ENCODE measurements at regions of chr10 and their contacts with region 1.

Region 1: GRCh38 chr10:91117505-91117904 is 103.0 kb upstream of the PCGF5 start:
- DNase-seq: no peak
- ATAC-seq: no peak
- H3K4me3 ChIP-seq: no peak overlapping the region
- H3K4me3 Mint-ChIP-seq: no peak overlapping the region
- H3K27ac ChIP-seq: no peak overlapping the region
- H3K27ac Mint-ChIP-seq: no peak overlapping the region
- H3K4me1 ChIP-seq: no peaks in the 10 kb centered on the region
- H3K4me1 Mint-ChIP-seq: no peaks in the 10 kb centered on the region
- H3K27me3 ChIP-seq: no peaks in the 10 kb centered on the region
- H3K27me3 Mint-ChIP-seq: peaks cover 0 to under 1% of the 10 kb centered on the region in 2 donors

Region 2: GRCh38 chr10:90857635-90858460 is 259.7 kb before region 1 on chr10 and contains the start of gene HTR7:
- CTCF ChIA-PET with region 1: no interaction called
- POLR2A ChIA-PET with region 1: interaction called in 1 of 2 experiments, 12 read pairs
- DNase-seq: peak in 34 of 35 experiments; percentile 21 to 74 (median 46)
- ATAC-seq: peak; percentile 89 to 92 (median 90)
- H3K4me3 ChIP-seq: peak within 1 kb of the TSS; percentile 38 to 84
- H3K4me3 Mint-ChIP-seq: peak within 1 kb of the TSS; percentile 85 to 89 (median 86)
- H3K27ac ChIP-seq: no peak within 1 kb of the TSS
- H3K27ac Mint-ChIP-seq: peak within 1 kb of the TSS in 1 of 2 donors; percentile 52
- H3K4me1 ChIP-seq: peaks cover 6 to 14% of the 10 kb centered on the region in 2 experiments
- H3K4me1 Mint-ChIP-seq: peaks cover 11 to 13% (median 11%) of the 10 kb centered on the region in 3 donors
- H3K27me3 ChIP-seq: peaks cover 7 to 28% of the 10 kb centered on the region in 2 experiments
- H3K27me3 Mint-ChIP-seq: peaks cover 39 to 51% of the 10 kb centered on the region in 2 donors
- total RNA-seq, gene HTR7: 0.07 TPM in 1 of 5 donors, not detected in the others